Tibial artery (tissue), 4 donors: ENCODE measurements at regions of chr2 and their contacts with region 1.

Region 1: GRCh38 chr2:212402315-212402714 is 136.3 kb downstream of the ERBB4 start:
- DNase-seq: no peak
- H3K4me3 ChIP-seq: no peak overlapping the region
- H3K27ac ChIP-seq: no peak overlapping the region
- H3K4me1 ChIP-seq: no peaks in the 10 kb centered on the region
- H3K27me3 ChIP-seq: no peaks in the 10 kb centered on the region
- CTCF ChIP-seq: no peak

Region 2: GRCh38 chr2:210412660-210413059 is 1989.7 kb before region 1 on chr2:
- intact Hi-C with region 1: loop called (anchors 5 kb)
- DNase-seq: no peak
- H3K4me3 ChIP-seq: no peak overlapping the region
- H3K27ac ChIP-seq: no peak overlapping the region
- H3K4me1 ChIP-seq: no peaks in the 10 kb centered on the region
- H3K27me3 ChIP-seq: no peaks in the 10 kb centered on the region
- CTCF ChIP-seq: no peak

Region 3: GRCh38 chr2:212346865-212347264 is 55.5 kb before region 1 on chr2:
- intact Hi-C with region 1: no loop called
- DNase-seq: no peak
- H3K4me3 ChIP-seq: no peak overlapping the region
- H3K27ac ChIP-seq: peak overlapping the region in 1 of 2 donors; percentile 28
- H3K4me1 ChIP-seq: peaks cover 0 to 56% (median 0%) of the 10 kb centered on the region in 4 donors
- H3K27me3 ChIP-seq: no peaks in the 10 kb centered on the region
- CTCF ChIP-seq: no peak